A549 (cell line): ENCODE measurements at regions of chr20 and their contacts with region 1.

Region 1: DNA sequence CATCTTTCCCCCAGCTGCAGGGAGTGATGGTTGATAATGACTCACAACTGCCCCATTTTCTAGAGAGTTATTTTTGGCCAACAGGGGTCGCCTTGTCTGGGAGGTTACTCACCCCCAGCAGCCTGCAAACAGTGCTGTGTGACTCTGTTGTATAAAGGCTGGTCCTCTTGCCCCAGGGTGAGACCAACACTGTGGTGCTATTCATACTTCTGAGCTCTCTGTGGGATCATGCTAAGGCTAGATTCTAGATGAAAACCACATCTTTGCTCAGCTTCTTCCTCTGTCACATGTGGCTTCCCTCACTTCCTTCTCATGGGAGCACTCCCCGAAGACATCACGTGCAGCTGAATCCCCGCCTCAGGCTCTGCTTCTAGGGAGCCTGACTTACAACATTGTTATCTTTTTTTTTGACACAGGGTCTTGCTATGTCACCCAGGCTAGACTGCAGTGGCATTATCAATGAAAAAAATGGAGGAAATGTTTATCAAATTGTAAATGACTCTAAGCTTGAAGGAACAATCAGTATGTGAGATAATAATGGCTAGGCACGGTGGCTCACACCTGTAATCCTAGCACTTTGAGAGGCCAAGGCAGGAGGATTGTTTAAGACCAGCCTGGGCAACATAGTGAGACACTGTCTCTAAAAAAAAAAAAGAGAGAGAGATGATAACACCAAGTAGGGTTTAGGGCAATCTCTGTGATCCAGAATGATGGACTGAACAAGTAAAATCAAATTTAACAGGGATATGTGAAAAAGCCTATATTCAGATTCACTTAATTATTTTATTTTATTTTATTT is 55.7 kb upstream of the SLC23A2 start:
- DNase-seq: peak; percentile 64 to 77
- ATAC-seq: peak; percentile 88 to 91
- H3K4me3 ChIP-seq: no peak overlapping the region
- H3K27ac ChIP-seq: peak overlapping the region; percentile 24 to 60; a peak in 4 of 6 replicates
- H3K4me1 ChIP-seq: peaks cover 19% of the 10 kb centered on the region
- CTCF ChIP-seq: peak; percentile 62
- EP300 ChIP-seq: no peak
- POLR2A ChIP-seq: no peak
- RAD21 ChIP-seq: peak; percentile 51 to 55; a peak in 4 of 5 replicates

Region 2: DNA sequence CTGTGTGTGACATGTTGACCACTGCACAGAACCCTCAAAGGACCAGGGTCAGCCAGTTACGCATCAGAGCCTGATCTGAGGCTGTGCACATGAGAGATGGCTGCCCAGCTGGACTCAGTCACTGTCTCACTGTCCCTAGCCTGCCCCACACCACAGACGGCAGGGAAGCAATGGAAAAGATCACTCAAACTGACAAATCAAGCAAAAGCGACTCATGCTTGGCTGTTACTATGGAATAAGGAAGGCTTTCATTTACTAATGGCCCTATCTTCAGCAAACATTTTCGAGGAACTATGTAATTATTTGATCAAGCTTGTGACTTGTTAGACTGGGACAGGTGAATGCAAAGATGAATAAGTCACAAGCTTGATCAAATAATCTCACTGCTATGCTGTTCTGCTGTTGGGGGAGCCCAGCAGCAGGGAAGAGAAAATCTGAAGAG is 192.7 kb before region 1 on chr20:
- CTCF ChIA-PET with region 1: no interaction called
- POLR2A ChIA-PET with region 1: no interaction called
- DNase-seq: peak in 1 of 2 experiments; percentile 35
- ATAC-seq: peak; percentile 36 to 43; a peak in 3 of 6 replicates
- H3K4me3 ChIP-seq: no peak overlapping the region
- H3K27ac ChIP-seq: no peak overlapping the region
- H3K4me1 ChIP-seq: peaks cover 14% of the 10 kb centered on the region
- CTCF ChIP-seq: no peak
- EP300 ChIP-seq: no peak
- POLR2A ChIP-seq: no peak
- RAD21 ChIP-seq: no peak

Region 3: GRCh38 chr20:4937397-4938319 is 119.3 kb before region 1 on chr20:
- CTCF ChIA-PET with region 1: no interaction called
- POLR2A ChIA-PET with region 1: no interaction called
- DNase-seq: no peak
- ATAC-seq: peak in 1 of 2 experiments; percentile 33; a peak in 2 of 6 replicates
- H3K4me3 ChIP-seq: no peak overlapping the region
- H3K27ac ChIP-seq: no peak overlapping the region
- H3K4me1 ChIP-seq: peaks cover 9% of the 10 kb centered on the region; the same call in 2 of the 3 replicates
- CTCF ChIP-seq: no peak
- EP300 ChIP-seq: no peak
- POLR2A ChIP-seq: no peak
- RAD21 ChIP-seq: no peak

Region 4: DNA sequence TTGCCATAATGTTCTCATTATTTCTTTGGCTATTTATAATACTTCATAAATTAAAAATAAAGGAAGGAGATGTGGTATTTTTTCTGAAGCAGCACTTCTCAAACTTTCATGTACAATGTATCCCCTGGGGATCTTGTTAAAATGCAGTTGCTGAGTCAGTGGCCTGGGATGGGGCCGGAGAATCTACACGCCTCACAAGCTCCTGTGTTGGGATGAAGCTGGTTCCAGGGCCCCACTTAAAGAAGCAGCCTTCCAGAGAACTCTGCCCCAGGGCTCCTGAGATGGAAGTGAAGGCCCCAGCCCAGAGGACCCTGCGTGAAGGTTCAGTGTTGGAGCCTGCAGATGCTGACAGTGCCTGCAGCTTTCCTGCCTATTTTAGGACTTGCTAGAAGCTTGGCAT is 15.6 kb before region 1 on chr20:
- CTCF ChIA-PET with region 1: interaction called, 23 read pairs
- POLR2A ChIA-PET with region 1: no interaction called
- DNase-seq: no peak
- ATAC-seq: peak; percentile 47 to 56; a peak in 3 of 6 replicates
- H3K4me3 ChIP-seq: no peak overlapping the region
- H3K27ac ChIP-seq: peak overlapping the region in 1 of 2 experiments; percentile 5; a peak in 1 of 6 replicates
- H3K4me1 ChIP-seq: peaks cover 5% of the 10 kb centered on the region; the same call in 2 of the 3 replicates
- CTCF ChIP-seq: no peak
- EP300 ChIP-seq: no peak
- POLR2A ChIP-seq: no peak
- RAD21 ChIP-seq: no peak

Region 5: GRCh38 chr20:5046656-5047339 is 10.2 kb before region 1 on chr20:
- CTCF ChIA-PET with region 1: interaction called, 23 read pairs
- POLR2A ChIA-PET with region 1: no interaction called
- DNase-seq: no peak
- ATAC-seq: no peak
- H3K4me3 ChIP-seq: no peak overlapping the region
- H3K27ac ChIP-seq: no peak overlapping the region
- H3K4me1 ChIP-seq: peaks cover 8% of the 10 kb centered on the region; the same call in 1 of the 3 replicates
- CTCF ChIP-seq: no peak
- EP300 ChIP-seq: no peak
- POLR2A ChIP-seq: no peak
- RAD21 ChIP-seq: no peak